Cardiac septum (tissue), 1 donor: ENCODE measurements at regions of chr15 and their contacts with region 1.

Region 1: DNA sequence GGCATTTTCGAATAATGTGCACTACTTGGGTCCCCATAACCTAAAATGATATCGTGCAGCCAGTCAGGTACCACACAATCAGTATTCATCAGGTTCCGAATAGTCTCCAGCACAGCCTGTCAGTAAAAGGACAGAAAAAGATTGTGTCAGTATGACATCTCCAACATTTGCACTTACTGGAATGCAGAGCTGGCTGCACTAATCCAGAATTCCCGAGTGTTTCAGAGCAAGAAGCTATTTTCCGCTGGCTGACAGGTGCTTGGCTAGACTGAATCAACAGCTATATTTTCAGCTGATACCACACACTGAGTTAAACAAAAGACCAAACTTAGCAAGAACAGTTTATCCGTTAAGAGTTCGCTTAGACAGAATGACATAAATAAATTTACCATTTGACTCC is 68.8 kb downstream of the AQR start:
- DNase-seq: no peak

Region 2: DNA sequence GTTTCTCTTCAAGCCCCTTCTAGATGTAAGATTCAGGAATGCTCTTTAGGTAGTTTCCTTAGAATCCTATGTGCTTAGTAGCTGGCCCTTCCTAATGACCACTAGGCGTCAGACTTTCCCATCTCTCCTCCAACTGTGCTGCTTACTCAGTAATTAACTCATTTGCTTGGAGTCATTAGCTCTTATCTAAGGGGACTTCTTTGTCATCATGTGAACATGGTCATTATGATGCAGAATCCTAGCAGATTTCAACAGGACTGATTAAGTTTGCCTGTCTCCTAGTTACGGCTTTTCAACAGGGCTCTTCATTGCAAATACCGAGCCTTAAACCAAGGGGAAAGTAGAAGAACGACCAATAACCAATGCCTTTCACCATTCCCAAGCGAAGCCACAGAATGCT is 192.3 kb before region 1 on chr15:
- intact Hi-C with region 1: loop called (anchors 5 kb)
- DNase-seq: no peak

Region 3: GRCh38 chr15:34721802-34722795 is 178.6 kb before region 1 on chr15:
- intact Hi-C with region 1: no loop called
- DNase-seq: peak; percentile 82

Region 4: DNA sequence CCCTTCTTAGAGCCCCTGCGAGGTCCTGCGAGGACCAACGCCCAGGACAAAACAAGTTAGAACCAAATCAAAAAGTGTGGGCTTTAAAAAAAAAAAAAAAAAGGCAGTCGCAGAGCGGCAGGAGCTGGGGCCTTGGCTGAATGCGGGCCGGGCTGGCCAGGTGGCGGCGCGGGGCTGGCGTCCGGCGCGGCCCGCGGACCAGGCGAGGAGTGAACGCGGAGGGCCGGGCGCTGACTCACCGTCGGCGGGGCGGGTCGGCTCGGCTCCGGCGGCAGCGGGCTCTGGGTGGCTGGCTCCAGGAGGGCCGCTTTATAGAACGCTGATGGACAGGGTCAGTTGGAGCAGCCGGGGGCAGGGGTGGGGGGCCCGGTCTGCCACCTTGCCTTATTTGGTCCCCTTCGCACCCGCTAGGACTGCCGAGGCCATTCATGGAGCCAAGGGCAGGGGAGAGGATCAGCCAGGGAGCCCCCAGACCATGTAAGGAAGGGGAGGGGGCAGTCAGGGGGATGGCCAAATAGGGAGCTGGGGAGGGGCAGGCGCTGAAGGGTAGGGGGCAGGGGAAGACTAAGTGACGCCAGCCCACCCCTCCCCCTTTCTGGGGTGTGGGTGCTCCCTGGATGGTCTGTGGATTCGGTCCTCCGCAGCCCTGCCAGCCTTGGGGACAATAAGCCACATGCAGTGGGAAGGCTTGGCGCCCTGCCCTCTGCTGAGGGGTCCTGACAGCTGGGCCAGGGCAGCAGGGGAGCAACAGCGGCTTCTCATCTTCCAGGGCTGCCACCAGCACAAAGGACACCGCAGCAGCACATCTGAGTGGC is 105.3 kb before region 1 on chr15 and contains the start of gene ACTC1:
- intact Hi-C with region 1: loop called (anchors 2 kb)
- DNase-seq: peak; percentile 89
- total RNA-seq, gene ACTC1: 11,631 TPM

Region 5: DNA sequence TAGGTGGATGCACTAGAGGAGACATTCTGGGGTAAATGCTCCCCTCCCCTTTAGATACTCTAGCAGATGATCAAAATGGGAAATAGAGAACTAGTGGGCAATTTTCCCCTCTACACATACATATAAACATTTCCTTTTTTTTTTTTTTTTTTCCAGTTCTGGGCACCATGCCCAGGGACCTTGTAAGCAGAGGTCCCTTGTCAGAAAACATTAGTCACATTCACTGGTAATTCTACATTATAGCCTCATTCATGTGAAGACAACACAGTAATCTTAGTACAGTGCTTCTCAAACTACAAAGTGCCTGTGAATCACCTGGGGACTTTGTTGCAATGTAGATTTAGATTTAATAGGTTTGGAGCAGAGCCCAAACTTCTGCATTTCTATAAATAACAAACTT is 45.4 kb before region 1 on chr15:
- intact Hi-C with region 1: loop called (anchors 5 kb)
- DNase-seq: no peak

Region 6: DNA sequence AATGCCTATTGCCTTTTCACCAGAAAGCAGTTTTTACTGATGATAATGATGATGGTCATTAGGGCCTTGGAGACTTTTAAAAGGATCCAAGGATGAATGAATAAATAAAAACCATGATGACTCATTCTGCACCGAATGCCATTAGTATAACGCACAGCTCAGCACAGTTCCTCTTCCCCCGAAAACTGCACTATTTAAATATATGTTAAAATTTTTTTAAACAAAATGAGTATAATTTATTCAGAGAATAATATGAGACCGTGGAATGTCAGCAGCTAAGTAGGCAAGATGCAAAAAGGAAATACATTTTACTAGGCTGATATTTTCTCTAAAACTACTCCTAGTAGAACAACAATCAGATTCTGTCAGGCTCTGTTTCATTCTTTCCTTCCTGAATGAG is 267.7 kb after region 1 on chr15:
- intact Hi-C with region 1: no loop called
- DNase-seq: no peak